Activated CD4-positive, alpha-beta T cell treated with anti-CD3 and anti-CD28 coated beads, Interleukin-2, amount 10 ng/mL, durations not matched to agents 24 days and 14 days (primary cell): ENCODE measurements at regions of chr4 and their contacts with region 1.

Region 1: DNA sequence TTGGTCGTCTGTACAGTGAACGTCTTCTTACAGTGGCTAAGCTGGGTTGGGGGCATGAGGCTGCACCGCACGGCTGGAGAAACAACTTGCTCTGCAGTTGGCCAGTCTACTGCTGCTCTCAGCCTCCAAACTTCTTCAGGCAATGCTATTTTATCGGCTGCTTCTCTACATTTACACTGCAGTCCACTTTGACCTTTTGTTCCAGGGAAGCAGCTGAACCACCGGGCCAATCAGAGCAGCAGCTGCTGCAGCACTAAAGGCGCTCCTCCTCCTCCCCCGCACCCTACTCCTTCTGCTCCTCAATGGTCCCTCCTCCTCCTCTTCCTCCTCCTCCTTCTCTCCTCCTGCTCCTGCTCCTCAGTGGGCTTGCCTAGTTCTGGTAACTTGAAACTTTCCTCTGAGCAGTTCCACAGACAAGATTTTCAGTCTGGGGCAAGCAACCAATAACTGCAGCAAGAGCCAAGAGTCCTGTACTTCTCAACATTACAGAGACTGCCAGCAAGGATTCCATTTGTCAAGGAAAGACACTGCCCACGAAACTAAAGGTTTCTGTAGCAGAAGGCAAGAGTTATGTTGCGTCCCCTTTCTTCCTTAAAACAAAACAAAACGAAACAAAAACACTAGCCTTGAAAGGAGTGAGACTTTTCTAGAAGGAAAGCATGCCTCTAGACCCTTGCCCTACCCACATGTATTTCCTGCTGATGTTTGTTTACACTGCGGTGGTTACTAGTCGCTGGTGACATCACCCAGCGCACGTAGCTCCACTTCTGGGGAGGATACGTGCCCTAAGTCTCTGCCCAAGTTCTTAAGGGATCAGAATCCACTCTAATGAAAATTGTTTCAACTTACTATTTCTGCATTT is 125.7 kb upstream of the NAP1L5 start:
- DNase-seq: peak; percentile 93
- H3K4me3 Mint-ChIP-seq: peak overlapping the region; percentile 88
- H3K27ac Mint-ChIP-seq: peak overlapping the region; percentile 98
- H3K4me1 Mint-ChIP-seq: peaks cover 38% of the 10 kb centered on the region
- H3K27me3 Mint-ChIP-seq: peaks cover under 1% of the 10 kb centered on the region

Region 2: GRCh38 chr4:88523325-88524129 is 299.8 kb before region 1 on chr4 and contains the start of gene PYURF:
- intact Hi-C with region 1: loop called (anchors 5 kb)
- DNase-seq: peak; percentile 94
- H3K4me3 Mint-ChIP-seq: peak within 1 kb of the TSS; percentile 98
- H3K27ac Mint-ChIP-seq: peak within 1 kb of the TSS; percentile 94
- H3K4me1 Mint-ChIP-seq: peaks cover 37% of the 10 kb centered on the region
- H3K27me3 Mint-ChIP-seq: no peaks in the 10 kb centered on the region
- total RNA-seq, gene PYURF: 54.6 and 57.0 TPM in 2 replicates

Region 3: DNA sequence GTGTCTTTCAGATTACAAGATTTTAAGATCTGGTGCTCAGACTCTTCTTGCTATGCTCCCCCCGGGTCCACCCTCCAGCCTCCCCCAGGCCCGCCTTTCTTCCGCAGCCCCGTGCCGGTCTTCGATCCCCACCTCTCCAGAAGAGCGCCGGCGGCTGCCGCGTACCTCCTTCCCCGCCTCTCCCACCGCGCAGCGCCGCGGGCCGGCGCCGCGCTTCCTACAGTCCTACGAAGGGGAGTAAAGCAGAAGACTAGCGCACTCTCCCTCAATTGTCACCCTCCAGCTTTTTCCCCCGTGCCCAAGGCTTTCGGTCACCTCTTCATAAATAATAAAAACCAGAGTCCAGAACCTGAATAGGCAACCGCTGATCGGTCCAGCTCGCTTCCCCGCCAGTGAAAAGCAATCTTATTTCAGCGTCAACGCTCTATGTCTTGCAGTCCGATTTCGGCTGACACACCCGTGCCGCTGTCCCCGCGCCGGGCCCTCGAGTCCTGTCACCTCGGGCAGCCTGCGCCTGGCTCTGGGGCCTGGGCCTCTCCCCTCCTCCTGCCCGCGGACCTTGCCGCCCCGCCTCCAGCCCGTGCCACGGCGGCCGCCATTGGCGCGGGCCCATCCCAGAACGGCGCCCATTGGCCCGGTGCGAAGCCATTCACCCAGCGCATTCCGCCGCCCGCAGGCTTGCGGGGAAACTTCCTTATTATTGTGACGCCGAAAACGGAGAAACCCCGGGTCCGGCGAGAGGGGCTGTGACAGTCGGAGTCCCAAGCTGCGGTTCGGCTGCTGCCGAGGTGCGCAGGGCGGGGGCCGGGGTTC is 231.3 kb before region 1 on chr4 and contains the start of gene HERC3:
- intact Hi-C with region 1: loop called (anchors 1 kb)
- DNase-seq: peak; percentile 98
- H3K4me3 Mint-ChIP-seq: peak within 1 kb of the TSS; percentile 90
- H3K27ac Mint-ChIP-seq: peak within 1 kb of the TSS; percentile 85
- H3K4me1 Mint-ChIP-seq: peaks cover 31% of the 10 kb centered on the region
- H3K27me3 Mint-ChIP-seq: peaks cover 17% of the 10 kb centered on the region
- total RNA-seq, gene HERC3: 18.8 and 18.9 TPM in 2 replicates

Region 4: GRCh38 chr4:88964450-88964849 is 141.2 kb after region 1 on chr4:
- intact Hi-C with region 1: loop called (anchors 5 kb)
- DNase-seq: no peak
- H3K4me3 Mint-ChIP-seq: no peak overlapping the region
- H3K27ac Mint-ChIP-seq: no peak overlapping the region
- H3K4me1 Mint-ChIP-seq: peaks cover 8% of the 10 kb centered on the region
- H3K27me3 Mint-ChIP-seq: no peaks in the 10 kb centered on the region

Region 5: DNA sequence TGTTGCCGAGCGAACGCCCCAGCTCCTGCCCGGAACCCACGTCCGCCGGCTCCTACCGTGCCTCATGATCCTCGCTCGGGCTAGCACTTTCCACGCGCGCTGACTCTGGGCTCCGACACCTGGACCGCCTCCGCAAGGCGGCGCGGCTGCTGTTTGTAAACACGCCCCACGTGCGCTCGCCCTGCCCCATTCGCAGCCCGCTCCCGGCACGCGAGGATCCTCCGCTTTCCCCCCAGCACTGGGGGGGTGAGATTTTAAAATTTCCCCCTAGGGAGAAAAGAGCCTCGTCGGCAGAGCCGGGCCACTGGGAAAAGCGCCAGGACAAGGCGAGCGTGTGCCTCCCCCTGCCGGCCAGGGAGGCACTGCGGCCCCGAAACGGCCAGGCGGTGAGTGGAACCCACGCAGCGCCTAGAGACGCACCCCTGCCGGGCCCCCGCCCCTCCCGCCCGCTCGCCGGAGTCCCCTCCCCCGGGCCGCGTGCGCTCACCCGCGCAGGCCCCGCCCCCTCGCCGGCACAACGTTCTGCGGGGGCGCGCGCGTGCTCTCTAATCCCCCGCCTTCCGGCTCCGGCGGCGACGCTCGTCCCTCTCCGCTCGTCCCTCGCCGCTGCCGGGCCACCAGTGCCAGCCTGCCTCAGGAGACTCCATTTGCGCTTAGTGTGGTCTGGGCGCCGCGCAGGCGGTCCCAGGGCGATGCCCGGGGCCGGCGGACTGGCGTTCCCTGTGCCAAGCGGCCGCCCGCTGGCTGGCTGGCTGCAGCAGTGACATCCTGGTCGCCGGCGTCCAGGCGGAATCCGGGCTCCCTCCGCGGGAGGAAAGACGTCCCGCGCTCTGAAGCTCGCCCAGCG is 287.9 kb after region 1 on chr4 and contains the start of gene TIGD2:
- intact Hi-C with region 1: loop called (anchors 1 kb)
- DNase-seq: peak; percentile 95
- H3K4me3 Mint-ChIP-seq: peak within 1 kb of the TSS; percentile 83
- H3K27ac Mint-ChIP-seq: peak within 1 kb of the TSS; percentile 76
- H3K4me1 Mint-ChIP-seq: peaks cover 22% of the 10 kb centered on the region
- H3K27me3 Mint-ChIP-seq: peaks cover 32% of the 10 kb centered on the region
- total RNA-seq, gene TIGD2: 2.6 and 3.5 TPM in 2 replicates

Region 6: GRCh38 chr4:89773805-89774204 is 950.5 kb after region 1 on chr4:
- intact Hi-C with region 1: no loop called
- DNase-seq: no peak
- H3K4me3 Mint-ChIP-seq: no peak overlapping the region
- H3K27ac Mint-ChIP-seq: no peak overlapping the region
- H3K4me1 Mint-ChIP-seq: no peaks in the 10 kb centered on the region
- H3K27me3 Mint-ChIP-seq: peaks cover 9% of the 10 kb centered on the region